Breast epithelium (tissue), 4 donors: ENCODE measurements at regions of chr6 and their contacts with region 1.

Region 1: GRCh38 chr6:67300430-67301040 is 1334.5 kb upstream of the ADGRB3 start:
- DNase-seq: no peak
- H3K4me3 ChIP-seq: no peak overlapping the region
- H3K27ac ChIP-seq: no peak overlapping the region
- H3K4me1 ChIP-seq: no peaks in the 10 kb centered on the region
- H3K27me3 ChIP-seq: no peaks in the 10 kb centered on the region
- CTCF ChIP-seq: no peak
- POLR2A ChIP-seq: no peak

Region 2: GRCh38 chr6:66245231-66245630 is 1055.3 kb before region 1 on chr6:
- intact Hi-C with region 1: loop called (anchors 5 kb)
- DNase-seq: no peak
- H3K4me3 ChIP-seq: no peak overlapping the region
- H3K27ac ChIP-seq: no peak overlapping the region
- H3K4me1 ChIP-seq: no peaks in the 10 kb centered on the region
- H3K27me3 ChIP-seq: no peaks in the 10 kb centered on the region
- CTCF ChIP-seq: no peak
- POLR2A ChIP-seq: no peak

Region 3: GRCh38 chr6:67653561-67653960 is 353.0 kb after region 1 on chr6:
- intact Hi-C with region 1: no loop called
- DNase-seq: no peak
- H3K4me3 ChIP-seq: no peak overlapping the region
- H3K27ac ChIP-seq: no peak overlapping the region
- H3K4me1 ChIP-seq: no peaks in the 10 kb centered on the region
- H3K27me3 ChIP-seq: no peaks in the 10 kb centered on the region
- CTCF ChIP-seq: no peak
- POLR2A ChIP-seq: no peak

Region 4: DNA sequence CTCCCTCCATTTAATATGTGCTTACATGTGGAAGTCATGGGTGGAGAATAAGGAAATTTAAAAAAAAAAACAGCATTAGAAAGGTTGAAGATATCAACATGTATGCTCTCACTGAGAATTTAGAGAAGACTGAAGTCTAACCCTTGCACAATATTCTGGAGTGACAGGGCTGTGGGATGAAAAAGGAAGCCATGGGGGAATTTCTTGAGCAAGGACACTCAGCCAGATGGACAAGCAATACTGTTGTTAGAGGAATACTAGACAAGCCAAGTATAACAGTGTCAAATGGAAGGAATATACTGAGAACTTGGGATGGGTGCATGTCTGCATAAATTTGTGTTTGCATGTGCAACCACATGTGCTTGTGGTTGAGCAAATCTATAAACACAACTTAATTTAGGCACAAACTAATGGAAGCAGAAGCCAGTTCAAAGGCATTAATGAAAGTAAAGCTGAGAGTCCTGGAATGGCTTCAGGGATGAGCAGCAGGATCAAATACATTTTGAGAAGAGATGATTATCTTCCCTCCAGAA is 1454.2 kb after region 1 on chr6:
- intact Hi-C with region 1: no loop called
- DNase-seq: no peak
- H3K4me3 ChIP-seq: no peak overlapping the region
- H3K27ac ChIP-seq: no peak overlapping the region
- H3K4me1 ChIP-seq: no peaks in the 10 kb centered on the region
- H3K27me3 ChIP-seq: no peaks in the 10 kb centered on the region
- CTCF ChIP-seq: no peak
- POLR2A ChIP-seq: no peak